Heart left ventricle (tissue), 16 donors: ENCODE measurements at regions of chr1 and their contacts with region 1.

Region 1: GRCh38 chr1:201348211-201348566 is 29.3 kb downstream of the TNNT2 start:
- DNase-seq: peak in 3 of 5 donors; percentile 24 to 55 (median 37)
- ATAC-seq: peak; percentile 7 to 42 (median 26)
- H3K4me3 ChIP-seq: no peak overlapping the region
- H3K27ac ChIP-seq: no peak overlapping the region
- H3K4me1 ChIP-seq: peaks cover 0 to 13% (median 0%) of the 10 kb centered on the region in 12 donors
- H3K27me3 ChIP-seq: no peaks in the 10 kb centered on the region
- CTCF ChIP-seq: peak in 11 of 12 donors; percentile 38 to 59 (median 49)
- POLR2A ChIP-seq: no peak

Region 2: DNA sequence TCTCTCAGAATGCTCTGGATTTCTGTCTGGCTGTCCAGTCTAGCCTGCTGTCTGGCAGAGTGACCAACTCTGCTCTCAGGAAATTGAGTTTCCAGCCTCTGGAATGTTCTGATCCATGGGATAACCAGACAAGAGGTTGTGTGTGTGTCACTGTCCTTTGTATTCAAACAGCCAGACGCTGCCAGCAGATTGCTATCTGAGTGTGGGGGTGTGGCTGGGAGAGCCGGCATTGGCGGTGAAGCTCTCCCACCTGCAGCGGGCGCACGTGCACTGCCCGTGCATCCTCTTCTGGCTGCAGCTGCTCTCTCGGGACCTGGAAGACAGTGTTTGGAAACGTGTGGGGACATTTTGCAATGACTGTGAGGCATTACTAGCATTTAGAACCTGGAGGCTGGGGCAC is 38.8 kb before region 1 on chr1:
- intact Hi-C with region 1: loop called in 2 of 10 experiments (anchors 5 kb)
- DNase-seq: peak; percentile 75 to 84 (median 77)
- ATAC-seq: peak; percentile 54 to 86 (median 65)
- H3K4me3 ChIP-seq: no peak overlapping the region
- H3K27ac ChIP-seq: peak overlapping the region in 11 of 12 donors; percentile 17 to 81 (median 65)
- H3K4me1 ChIP-seq: peaks cover 0 to 42% (median 25%) of the 10 kb centered on the region in 12 donors
- H3K27me3 ChIP-seq: peaks cover 0 to 5% (median 0%) of the 10 kb centered on the region in 9 donors
- CTCF ChIP-seq: peak in 5 of 12 donors; percentile 20 to 43 (median 29)
- POLR2A ChIP-seq: no peak

Region 3: GRCh38 chr1:201408176-201408833 is 60.1 kb after region 1 on chr1:
- intact Hi-C with region 1: loop called in 7 of 10 experiments (anchors 1 to 5 kb)
- DNase-seq: peak; percentile 75 to 86 (median 83)
- ATAC-seq: peak; percentile 70 to 87 (median 80)
- H3K4me3 ChIP-seq: no peak overlapping the region
- H3K27ac ChIP-seq: peak overlapping the region in 2 of 12 donors; percentile 19 to 28
- H3K4me1 ChIP-seq: peaks cover 0 to 22% (median 4%) of the 10 kb centered on the region in 12 donors
- H3K27me3 ChIP-seq: no peaks in the 10 kb centered on the region
- CTCF ChIP-seq: peak; percentile 88 to 96 (median 93)
- POLR2A ChIP-seq: no peak

Region 4: DNA sequence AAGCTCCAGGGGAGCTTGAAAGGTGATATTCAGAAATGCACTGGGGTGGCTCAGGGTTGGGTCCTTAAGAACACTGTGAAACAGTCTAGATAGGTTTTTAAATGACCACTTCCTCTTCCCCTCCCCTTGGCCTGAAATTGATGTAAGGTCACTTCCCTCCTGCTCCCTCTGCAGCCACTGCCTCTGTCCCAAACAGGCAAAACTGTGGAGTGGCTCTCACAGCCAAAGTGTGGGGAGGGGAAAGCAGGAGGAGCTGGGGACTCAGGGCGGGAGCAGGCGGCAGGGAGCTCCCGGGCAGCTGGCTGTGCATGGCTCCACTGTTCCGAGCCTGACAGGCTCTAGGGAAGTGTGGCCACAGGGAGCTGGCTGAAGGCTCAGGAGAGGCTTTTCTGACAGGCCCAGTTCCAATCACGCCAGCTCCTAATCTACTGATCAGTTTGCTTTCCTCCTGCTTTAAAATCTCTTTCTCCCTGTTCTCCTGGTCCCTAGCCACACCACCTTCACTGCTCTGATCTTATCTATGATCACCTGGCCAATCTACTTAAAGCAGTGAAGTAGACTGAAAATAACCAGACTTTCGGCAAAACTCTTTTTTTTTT is 163.9 kb after region 1 on chr1:
- intact Hi-C with region 1: loop called in 1 of 10 experiments (anchors 5 kb)
- DNase-seq: peak; percentile 76 to 82 (median 77)
- ATAC-seq: peak; percentile 54 to 87 (median 70)
- H3K4me3 ChIP-seq: peak overlapping the region in 2 of 12 donors; percentile 3 to 14
- H3K27ac ChIP-seq: peak overlapping the region; percentile 61 to 98 (median 72)
- H3K4me1 ChIP-seq: peaks cover 7 to 44% (median 28%) of the 10 kb centered on the region in 12 donors
- H3K27me3 ChIP-seq: no peaks in the 10 kb centered on the region
- CTCF ChIP-seq: no peak
- POLR2A ChIP-seq: no peak